Mammary epithelial cell (primary cell): ENCODE measurements at regions of chr13 and their contacts with region 1.

Region 1: DNA sequence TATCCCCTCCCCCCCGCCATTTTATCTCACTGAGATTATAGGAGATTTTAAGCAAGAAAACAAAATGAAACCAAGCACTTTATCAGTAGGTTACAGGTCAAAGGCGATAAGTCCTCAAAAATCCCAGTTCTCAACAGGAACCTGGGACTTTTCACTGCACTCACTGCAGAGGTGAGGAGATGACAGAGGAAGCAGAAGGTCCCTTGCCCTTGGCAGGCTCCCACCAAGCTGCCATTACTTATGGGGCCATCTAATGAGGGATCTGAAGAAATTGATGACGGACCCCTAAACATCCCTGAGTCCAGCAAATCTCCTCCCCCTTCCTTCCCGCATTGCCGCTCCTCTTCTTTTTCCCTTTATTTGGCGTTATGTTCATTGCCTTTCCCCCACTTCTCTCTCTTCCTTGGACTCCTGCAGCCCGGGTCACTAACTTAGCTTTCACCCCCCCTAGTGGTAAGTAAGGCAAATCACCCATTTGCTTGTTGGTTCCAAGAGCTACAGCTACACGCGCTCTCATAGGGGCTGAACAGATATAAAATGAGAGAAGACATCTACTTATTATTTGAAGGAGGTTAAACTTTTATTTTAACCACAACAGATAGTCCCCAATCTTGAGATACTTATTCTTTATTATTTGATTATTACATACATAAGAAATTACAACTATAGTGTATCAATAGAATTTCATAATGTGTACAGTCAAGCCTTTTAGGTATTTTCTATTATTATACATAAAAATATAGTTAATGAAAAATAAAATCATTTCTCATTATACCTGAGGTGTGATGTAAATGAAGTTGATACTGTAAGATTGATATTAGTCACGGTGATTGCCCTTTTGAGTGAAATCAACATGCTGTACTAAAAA is 52.0 kb upstream of the ARGLU1 start:
- DNase-seq: peak; percentile 49
- H3K4me3 ChIP-seq: no peak overlapping the region
- H3K27ac ChIP-seq: no peak overlapping the region
- H3K4me1 ChIP-seq: no peaks in the 10 kb centered on the region
- H3K27me3 ChIP-seq: peaks cover 2% of the 10 kb centered on the region
- CTCF ChIP-seq: peak; percentile 82 to 89

Region 2: DNA sequence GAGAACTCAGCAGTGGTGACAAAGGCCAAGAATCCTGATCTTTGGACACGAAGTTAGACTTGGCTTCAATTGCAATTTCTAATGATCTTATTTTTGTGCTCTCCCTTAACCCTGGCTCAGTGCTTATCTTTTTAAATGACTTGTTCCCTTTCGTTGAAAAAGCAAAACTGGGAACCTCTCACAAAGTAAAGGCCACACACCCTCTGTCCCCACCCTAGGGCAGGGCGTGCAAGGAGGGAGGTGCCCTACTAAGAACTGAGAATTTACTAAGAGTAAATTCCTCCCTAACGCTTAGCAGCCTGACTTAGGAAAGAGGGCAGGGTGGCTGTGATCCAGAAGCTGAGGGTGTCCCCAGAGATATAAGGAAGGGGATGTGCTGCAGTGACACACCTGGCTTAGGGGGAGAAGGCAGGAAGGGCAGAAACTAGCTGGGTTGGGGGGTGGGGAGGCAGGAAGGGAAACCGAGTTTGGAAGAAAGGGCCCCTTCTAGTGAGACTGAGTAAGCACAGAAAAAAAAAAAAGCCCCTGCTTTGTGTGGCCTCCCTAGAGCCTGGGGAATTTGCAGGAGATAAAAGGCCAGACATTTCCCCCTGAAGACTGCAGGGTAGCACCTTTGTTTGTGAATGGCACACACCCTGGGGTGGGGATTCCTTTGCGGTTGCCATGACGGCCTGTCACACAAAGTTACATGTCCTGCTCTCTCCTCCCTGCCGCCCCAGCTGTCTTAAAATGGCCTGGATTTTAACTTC is 519.6 kb before region 1 on chr13:
- CTCF ChIA-PET with region 1: no interaction called
- dilution Hi-C with region 1: no loop called
- in situ Hi-C with region 1: no loop called
- intact Hi-C with region 1: loop called (anchors 10 kb)
- DNase-seq: no peak
- H3K4me3 ChIP-seq: no peak overlapping the region
- H3K27ac ChIP-seq: no peak overlapping the region
- H3K4me1 ChIP-seq: peaks cover 34% of the 10 kb centered on the region
- H3K27me3 ChIP-seq: no peaks in the 10 kb centered on the region
- CTCF ChIP-seq: no peak